ENCODE measurements at regions of chr4 and their contacts with region 1.

Region 1: GRCh38 chr4:145216535-145216934 is 36.1 kb upstream of the OTUD4 start:
- DNase-seq: no peak
- H3K4me3 ChIP-seq: no peak overlapping the region
- H3K27me3 ChIP-seq: no peaks in the 10 kb centered on the region
- CTCF ChIP-seq: peak; percentile 62

Region 2: GRCh38 chr4:145609481-145610427 is 393.2 kb after region 1 on chr4:
- CTCF ChIA-PET with region 1: interaction called, 35 read pairs
- POLR2A ChIA-PET with region 1: no interaction called
- DNase-seq: no peak
- H3K4me3 ChIP-seq: no peak overlapping the region
- H3K27me3 ChIP-seq: no peaks in the 10 kb centered on the region
- CTCF ChIP-seq: peak; percentile 74

Region 3: DNA sequence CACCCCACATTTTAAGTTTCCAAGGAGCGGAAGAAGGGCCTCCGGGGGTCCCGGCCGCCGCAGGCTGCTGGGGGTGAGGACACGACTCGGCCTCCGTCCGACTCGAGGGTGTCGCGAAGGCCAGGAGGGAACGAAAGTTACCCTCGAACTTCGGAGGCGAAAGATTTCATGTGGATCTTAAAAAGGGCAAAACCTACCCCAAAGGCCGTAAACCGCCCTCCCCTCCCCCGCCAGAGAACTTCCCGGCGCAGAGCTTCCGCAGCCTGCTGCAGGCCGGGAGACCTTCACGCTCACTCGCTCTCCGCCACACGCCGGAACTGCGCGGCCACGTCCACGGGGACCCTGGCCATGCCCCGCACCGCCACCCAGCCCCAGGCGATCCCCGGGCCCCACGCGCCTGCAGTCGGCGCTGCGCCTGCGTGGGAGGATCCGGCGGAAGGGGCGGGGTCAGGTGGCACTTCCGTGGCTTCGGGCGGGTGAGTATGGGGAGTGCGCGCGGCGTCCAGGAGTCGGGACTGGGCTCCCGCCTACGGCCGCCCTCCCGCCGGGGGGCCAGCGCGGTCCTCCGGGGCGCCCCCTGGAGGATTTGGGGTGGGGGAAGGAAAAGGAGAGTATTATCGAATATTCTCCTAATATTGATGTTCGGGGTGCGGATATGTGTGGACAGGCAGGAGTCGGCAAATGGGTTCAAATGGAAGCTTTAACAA is 402.6 kb after region 1 on chr4 and contains the start of gene MMAA:
- CTCF ChIA-PET with region 1: interaction called, 34 read pairs
- POLR2A ChIA-PET with region 1: no interaction called
- DNase-seq: peak; percentile 56
- H3K4me3 ChIP-seq: peak within 1 kb of the TSS; percentile 75
- H3K27me3 ChIP-seq: no peaks in the 10 kb centered on the region
- CTCF ChIP-seq: peak; percentile 56
- polyA plus RNA-seq, gene MMAA: 3.4 and 7.9 TPM in 2 replicates